MCF 10A (cell line): ENCODE measurements at regions of chr16 and their contacts with region 1.

Region 1: DNA sequence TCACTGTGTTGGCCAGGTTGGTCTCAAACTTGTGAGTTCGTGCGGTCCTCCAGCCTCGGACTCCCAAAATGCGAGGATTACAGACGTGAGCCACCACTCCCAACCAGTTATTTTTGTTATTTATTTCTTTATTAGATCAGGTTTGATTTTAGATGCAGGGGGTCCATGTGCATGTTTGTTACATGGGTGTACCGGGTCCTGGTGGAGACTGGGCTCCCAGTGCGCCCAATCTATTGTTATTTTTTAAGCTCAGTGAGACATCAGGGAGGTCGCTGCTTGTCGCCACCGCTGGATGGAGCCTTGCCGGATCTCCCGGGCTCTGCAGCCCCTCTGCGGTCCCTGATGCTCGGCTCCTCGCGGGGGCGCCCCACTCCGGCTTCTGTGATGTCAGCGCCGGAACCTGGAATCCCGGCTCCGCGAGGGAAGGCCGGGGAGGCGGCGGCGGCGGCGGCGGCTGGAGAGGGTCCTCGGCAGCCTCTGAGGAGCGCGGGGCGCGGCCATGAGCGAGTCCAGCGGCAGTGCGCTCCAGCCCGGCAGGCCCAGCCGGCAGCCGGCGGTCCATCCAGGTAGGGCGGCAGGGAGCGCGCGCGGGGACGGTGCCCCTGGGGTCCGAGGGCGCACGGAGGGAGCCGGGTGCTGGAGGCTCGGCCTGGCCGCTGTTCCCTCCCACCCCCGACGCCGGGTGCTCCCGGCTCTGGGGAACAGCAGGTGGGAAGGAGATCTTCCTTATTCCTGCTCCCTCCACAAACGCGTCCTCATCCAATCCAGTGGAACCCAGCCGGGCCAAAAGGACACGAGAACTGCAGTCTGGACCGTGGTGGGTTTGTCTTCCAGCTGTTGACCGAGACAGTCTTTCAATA is at the start of gene TMC7:
- DNase-seq: peak; percentile 84
- H3K4me3 Mint-ChIP-seq: peak within 1 kb of the TSS; percentile 72
- H3K27ac Mint-ChIP-seq: peak within 1 kb of the TSS; percentile 49
- H3K4me1 Mint-ChIP-seq: peaks cover 9% of the 10 kb centered on the region
- H3K27me3 Mint-ChIP-seq: no peaks in the 10 kb centered on the region
- CTCF ChIP-seq: peak; percentile 92
- total RNA-seq, gene TMC7: 4.1 and 6.0 TPM in 2 replicates

Region 2: GRCh38 chr16:18789850-18790724 is 193.7 kb before region 1 on chr16 and contains the start of gene RPS15A:
- CTCF ChIA-PET with region 1: no interaction called
- POLR2A ChIA-PET with region 1: no interaction called
- intact Hi-C with region 1: no loop called
- DNase-seq: peak; percentile 98
- H3K4me3 Mint-ChIP-seq: peak within 1 kb of the TSS; percentile 95
- H3K27ac Mint-ChIP-seq: peak within 1 kb of the TSS; percentile 87
- H3K4me1 Mint-ChIP-seq: peaks cover 28% of the 10 kb centered on the region
- H3K27me3 Mint-ChIP-seq: no peaks in the 10 kb centered on the region
- CTCF ChIP-seq: no peak
- total RNA-seq, gene RPS15A: 869 and 1,431 TPM in 2 replicates

Region 3: GRCh38 chr16:18969050-18969854 is 14.5 kb before region 1 on chr16:
- CTCF ChIA-PET with region 1: interaction called, 19 read pairs
- POLR2A ChIA-PET with region 1: interaction called, 4 read pairs
- intact Hi-C with region 1: no loop called
- DNase-seq: peak; percentile 81
- H3K4me3 Mint-ChIP-seq: no peak overlapping the region
- H3K27ac Mint-ChIP-seq: no peak overlapping the region
- H3K4me1 Mint-ChIP-seq: peaks cover 6% of the 10 kb centered on the region
- H3K27me3 Mint-ChIP-seq: no peaks in the 10 kb centered on the region
- CTCF ChIP-seq: peak; percentile 82

Region 4: GRCh38 chr16:18999045-18999393 is 15.2 kb after region 1 on chr16:
- CTCF ChIA-PET with region 1: interaction called, 24 read pairs
- POLR2A ChIA-PET with region 1: interaction called, 4 read pairs
- intact Hi-C with region 1: no loop called
- DNase-seq: no peak
- H3K4me3 Mint-ChIP-seq: no peak overlapping the region
- H3K27ac Mint-ChIP-seq: peak overlapping the region; percentile 88
- H3K4me1 Mint-ChIP-seq: peaks cover 25% of the 10 kb centered on the region
- H3K27me3 Mint-ChIP-seq: no peaks in the 10 kb centered on the region
- CTCF ChIP-seq: no peak

Region 5: GRCh38 chr16:19005561-19006445 is 22.0 kb after region 1 on chr16:
- CTCF ChIA-PET with region 1: interaction called, 41 read pairs
- POLR2A ChIA-PET with region 1: interaction called, 13 read pairs
- intact Hi-C with region 1: no loop called
- DNase-seq: peak; percentile 96
- H3K4me3 Mint-ChIP-seq: peak overlapping the region; percentile 8
- H3K27ac Mint-ChIP-seq: peak overlapping the region; percentile 82
- H3K4me1 Mint-ChIP-seq: peaks cover 34% of the 10 kb centered on the region
- H3K27me3 Mint-ChIP-seq: no peaks in the 10 kb centered on the region
- CTCF ChIP-seq: no peak

Region 6: DNA sequence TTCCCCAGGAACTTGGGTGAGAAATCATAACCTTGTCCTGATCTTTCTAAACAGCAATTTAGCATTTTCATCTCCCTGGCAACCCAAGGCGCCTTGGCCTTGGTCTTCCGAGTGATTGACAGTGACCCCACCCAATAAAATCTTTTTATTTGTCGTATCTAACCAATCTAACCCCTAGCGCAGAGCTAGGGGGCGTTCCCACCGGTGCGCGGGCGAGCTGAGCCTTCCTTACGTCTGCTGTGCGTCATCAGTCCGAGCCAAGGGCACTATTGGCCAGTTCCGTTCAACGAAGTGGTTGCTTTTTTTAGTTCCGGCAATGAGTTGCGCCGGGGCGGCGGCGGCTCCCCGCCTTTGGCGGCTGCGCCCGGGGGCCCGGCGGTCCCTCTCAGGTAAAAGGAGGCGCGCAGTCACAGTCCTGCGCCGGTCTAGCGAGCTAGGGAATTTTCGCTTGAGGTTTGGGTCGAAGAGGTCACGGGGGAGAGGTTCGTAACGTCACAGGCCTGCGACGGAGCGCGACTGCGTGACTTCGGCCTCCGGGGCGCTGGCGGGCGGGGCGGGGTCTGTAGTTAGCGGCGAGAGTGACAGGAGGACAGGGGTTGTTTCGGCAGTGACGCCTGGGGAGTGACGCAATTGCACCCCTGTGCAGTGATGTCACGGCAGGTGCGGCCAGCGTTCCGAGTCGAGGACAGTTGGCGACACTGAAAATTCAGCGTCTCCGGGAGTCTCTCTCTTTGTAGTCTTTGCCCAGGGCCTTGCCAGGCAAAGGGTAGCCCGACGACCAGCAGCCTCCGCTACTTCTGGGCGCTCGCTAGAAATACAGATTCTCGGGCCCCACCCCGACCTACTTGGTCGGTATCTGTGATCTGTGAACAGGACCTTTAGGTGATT is 83.8 kb after region 1 on chr16 and contains the start of gene COQ7:
- CTCF ChIA-PET with region 1: interaction called, 202 read pairs
- POLR2A ChIA-PET with region 1: interaction called, 13 read pairs
- intact Hi-C with region 1: loop called (anchors 1 kb)
- DNase-seq: peak; percentile 99
- H3K4me3 Mint-ChIP-seq: peak within 1 kb of the TSS; percentile 90
- H3K27ac Mint-ChIP-seq: peak within 1 kb of the TSS; percentile 99
- H3K4me1 Mint-ChIP-seq: peaks cover 12% of the 10 kb centered on the region
- H3K27me3 Mint-ChIP-seq: no peaks in the 10 kb centered on the region
- CTCF ChIP-seq: no peak
- total RNA-seq, gene COQ7: 19.0 and 21.4 TPM in 2 replicates

Region 7: GRCh38 chr16:19075511-19075910 is 91.7 kb after region 1 on chr16:
- CTCF ChIA-PET with region 1: interaction called, 202 read pairs
- POLR2A ChIA-PET with region 1: interaction called, 5 read pairs
- intact Hi-C with region 1: loop called (anchors 1 kb)
- DNase-seq: no peak
- H3K4me3 Mint-ChIP-seq: no peak overlapping the region
- H3K27ac Mint-ChIP-seq: no peak overlapping the region
- H3K4me1 Mint-ChIP-seq: peaks cover 6% of the 10 kb centered on the region
- H3K27me3 Mint-ChIP-seq: no peaks in the 10 kb centered on the region
- CTCF ChIP-seq: no peak

Region 8: DNA sequence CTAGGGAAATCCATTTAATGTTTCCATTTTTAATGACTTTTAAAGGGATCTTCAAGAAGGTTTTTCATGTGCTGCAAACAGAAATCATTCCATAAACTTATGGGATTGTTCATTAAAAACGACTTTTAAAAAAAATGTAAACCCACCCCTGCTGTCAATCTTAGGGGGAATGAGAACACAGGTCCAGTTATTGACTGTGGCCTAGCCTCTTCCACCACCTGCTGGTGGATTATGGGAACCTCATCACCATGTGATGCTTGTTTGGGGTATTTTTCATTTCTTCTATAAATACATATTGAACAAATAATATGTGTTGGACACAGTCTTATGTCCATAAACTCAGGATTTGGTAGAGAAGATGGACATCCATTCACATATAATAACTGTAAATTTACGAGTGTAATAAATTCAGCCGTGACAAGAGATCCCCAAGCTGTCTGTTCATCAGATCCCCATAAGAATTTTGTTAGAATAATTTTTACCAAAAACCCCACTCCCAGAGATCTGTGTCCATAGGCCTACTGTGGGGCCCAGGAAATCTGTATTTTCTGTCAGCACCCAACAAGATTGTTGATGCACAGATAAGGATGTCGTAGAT is 391.9 kb after region 1 on chr16:
- CTCF ChIA-PET with region 1: interaction called, 4 read pairs
- POLR2A ChIA-PET with region 1: no interaction called
- intact Hi-C with region 1: loop called (anchors 2 kb)
- DNase-seq: peak; percentile 64
- H3K4me3 Mint-ChIP-seq: no peak overlapping the region
- H3K27ac Mint-ChIP-seq: no peak overlapping the region
- H3K4me1 Mint-ChIP-seq: no peaks in the 10 kb centered on the region
- H3K27me3 Mint-ChIP-seq: no peaks in the 10 kb centered on the region
- CTCF ChIP-seq: peak; percentile 90